ENCODE measurements at regions of chr2 and their contacts with region 1.

Region 1: GRCh38 chr2:61888267-61889055 is at the start of gene CCT4:
- DNase-seq: peak; percentile 86 to 99 (median 95)
- ATAC-seq: peak; percentile 94
- H3K4me3 ChIP-seq: peak within 1 kb of the TSS; percentile 92
- H3K4me3 Mint-ChIP-seq: peak within 1 kb of the TSS; percentile 85 to 100 (median 99)
- H3K27ac ChIP-seq: peak within 1 kb of the TSS; percentile 98
- H3K27ac Mint-ChIP-seq: peak within 1 kb of the TSS; percentile 98 to 100 (median 100)
- H3K4me1 ChIP-seq: peaks cover 15 to 17% of the 10 kb centered on the region in 2 donors
- H3K4me1 Mint-ChIP-seq: peaks cover 11 to 34% (median 29%) of the 10 kb centered on the region in 7 donors
- H3K27me3 ChIP-seq: no peaks in the 10 kb centered on the region
- H3K27me3 Mint-ChIP-seq: no peaks in the 10 kb centered on the region
- total RNA-seq, gene CCT4: 84.2 to 177 (median 90.3) TPM

Region 2: GRCh38 chr2:61065715-61066709 is 822.4 kb before region 1 on chr2 and contains the start of gene SANBR:
- CTCF ChIA-PET with region 1: no interaction called
- POLR2A ChIA-PET with region 1: no interaction called
- intact Hi-C with region 1: loop called in 1 of 2 experiments (anchors 10 kb)
- DNase-seq: peak; percentile 78 to 90 (median 83)
- ATAC-seq: peak; percentile 99
- H3K4me3 ChIP-seq: peak within 1 kb of the TSS; percentile 59
- H3K4me3 Mint-ChIP-seq: peak within 1 kb of the TSS; percentile 79 to 98 (median 95)
- H3K27ac ChIP-seq: peak within 1 kb of the TSS; percentile 49
- H3K27ac Mint-ChIP-seq: peak within 1 kb of the TSS; percentile 12 to 94 (median 79)
- H3K4me1 ChIP-seq: peaks cover 0 to 6% of the 10 kb centered on the region in 2 donors
- H3K4me1 Mint-ChIP-seq: peaks cover 0 to 17% (median 5%) of the 10 kb centered on the region in 7 donors
- H3K27me3 ChIP-seq: no peaks in the 10 kb centered on the region
- H3K27me3 Mint-ChIP-seq: peaks cover 0 to 2% (median 0%) of the 10 kb centered on the region in 5 donors
- total RNA-seq, gene SANBR: 2.0 to 5.9 (median 3.6) TPM

Region 3: DNA sequence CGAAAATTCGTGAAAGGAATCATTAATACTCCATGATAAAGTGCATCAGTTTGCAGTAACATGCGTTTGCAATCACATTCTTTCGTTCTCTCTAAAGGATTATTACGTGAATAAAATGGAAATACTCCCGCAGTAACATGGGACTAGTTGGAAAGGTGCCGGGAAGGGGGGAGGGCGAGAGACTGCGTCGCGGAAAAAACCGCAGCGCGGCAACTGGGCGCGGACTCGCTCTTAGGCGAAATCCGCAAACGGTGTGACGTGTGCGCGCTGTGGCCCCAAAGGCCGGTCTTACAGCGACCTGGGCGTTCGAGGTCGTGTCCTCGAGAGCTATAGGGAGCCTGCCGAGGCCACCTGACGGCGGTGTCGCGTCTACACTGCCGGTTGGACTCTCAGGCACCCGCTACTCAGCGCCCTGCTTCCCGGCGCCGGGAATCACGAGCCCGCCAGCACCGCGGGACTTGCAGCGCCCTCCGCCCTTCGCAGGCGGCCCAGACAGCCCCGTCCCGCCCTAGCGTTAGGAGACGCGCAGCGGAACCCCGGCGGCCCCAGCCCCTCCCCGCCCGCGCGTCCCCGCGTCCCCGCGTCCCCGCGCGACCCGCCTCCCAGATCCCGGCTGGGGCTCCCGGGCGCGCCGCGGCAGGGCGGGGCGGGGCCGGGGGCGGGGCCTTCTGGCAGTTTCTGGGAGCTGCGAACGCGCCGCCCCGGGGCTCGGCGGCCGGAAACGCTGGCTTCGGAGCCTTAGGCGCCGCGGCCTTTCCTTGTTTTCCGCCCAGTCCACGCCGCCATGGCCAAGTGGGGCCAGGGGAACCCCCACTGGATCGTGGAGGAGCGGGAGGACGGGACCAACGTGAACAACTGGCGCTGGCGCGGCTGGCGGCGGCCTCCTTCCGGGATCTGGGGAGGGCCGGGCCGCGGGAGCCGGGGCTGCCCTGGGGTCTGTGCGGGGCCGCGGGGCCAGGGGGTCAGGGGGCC is 711.4 kb before region 1 on chr2:
- CTCF ChIA-PET with region 1: no interaction called
- POLR2A ChIA-PET with region 1: no interaction called
- intact Hi-C with region 1: loop called in 1 of 2 experiments (anchors 1 kb)
- DNase-seq: peak; percentile 89 to 97 (median 93)
- ATAC-seq: peak; percentile 95
- H3K4me3 ChIP-seq: peak overlapping the region; percentile 82
- H3K4me3 Mint-ChIP-seq: peak overlapping the region; percentile 90 to 100 (median 94)
- H3K27ac ChIP-seq: peak overlapping the region; percentile 97
- H3K27ac Mint-ChIP-seq: peak overlapping the region; percentile 89 to 97 (median 95)
- H3K4me1 ChIP-seq: peaks cover 27 to 41% of the 10 kb centered on the region in 2 donors
- H3K4me1 Mint-ChIP-seq: peaks cover 38 to 53% (median 48%) of the 10 kb centered on the region in 7 donors
- H3K27me3 ChIP-seq: no peaks in the 10 kb centered on the region
- H3K27me3 Mint-ChIP-seq: peaks cover 0 to 8% (median 0%) of the 10 kb centered on the region in 5 donors

Region 4: GRCh38 chr2:61460163-61460562 is 428.3 kb before region 1 on chr2:
- CTCF ChIA-PET with region 1: no interaction called
- POLR2A ChIA-PET with region 1: no interaction called
- intact Hi-C with region 1: no loop called
- DNase-seq: no peak
- ATAC-seq: no peak
- H3K4me3 ChIP-seq: no peak overlapping the region
- H3K4me3 Mint-ChIP-seq: peak overlapping the region in 4 of 10 donors; percentile 16 to 52 (median 32)
- H3K27ac ChIP-seq: no peak overlapping the region
- H3K27ac Mint-ChIP-seq: peak overlapping the region in 3 of 9 donors; percentile 41 to 73 (median 72)
- H3K4me1 ChIP-seq: peaks cover 34 to 47% of the 10 kb centered on the region in 2 donors
- H3K4me1 Mint-ChIP-seq: peaks cover 43 to 94% (median 76%) of the 10 kb centered on the region in 7 donors
- H3K27me3 ChIP-seq: no peaks in the 10 kb centered on the region
- H3K27me3 Mint-ChIP-seq: no peaks in the 10 kb centered on the region

Region 5: DNA sequence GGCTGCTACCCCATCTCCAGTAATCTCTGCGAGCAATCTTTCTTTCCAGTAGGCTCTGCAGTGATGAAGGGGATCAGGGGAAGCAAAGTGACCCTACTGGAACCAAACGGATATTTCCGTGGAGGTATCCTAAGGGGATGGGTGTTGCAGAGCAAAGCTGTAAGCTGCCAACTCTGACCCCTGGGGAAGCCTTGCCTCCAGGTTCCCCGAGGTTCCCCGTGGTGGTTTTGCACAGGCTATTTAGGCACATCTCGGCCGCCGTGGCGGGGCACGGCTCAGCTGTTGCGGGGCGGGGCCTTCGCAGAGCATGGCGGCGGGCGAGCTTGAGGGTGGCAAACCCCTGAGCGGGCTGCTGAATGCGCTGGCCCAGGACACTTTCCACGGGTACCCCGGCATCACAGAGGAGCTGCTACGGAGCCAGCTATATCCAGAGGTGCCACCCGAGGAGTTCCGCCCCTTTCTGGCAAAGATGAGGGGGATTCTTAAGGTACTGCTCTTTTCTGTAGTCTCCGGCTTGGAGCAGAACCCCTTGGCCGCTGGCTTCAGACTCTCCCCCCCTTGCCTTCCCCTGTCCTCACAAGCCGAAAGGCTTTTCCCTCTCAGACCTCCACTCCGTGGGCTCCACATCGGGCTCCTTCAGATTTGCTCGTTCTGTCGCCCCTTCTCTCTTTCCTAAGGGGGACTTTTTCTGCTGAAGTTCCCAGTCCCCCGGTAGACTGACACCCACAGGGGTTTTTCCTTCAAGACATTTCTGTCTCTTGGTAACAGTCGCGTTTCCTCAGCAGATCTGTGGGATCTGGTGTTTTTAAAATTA is 17.1 kb after region 1 on chr2 and contains the start of gene COMMD1:
- CTCF ChIA-PET with region 1: no interaction called
- POLR2A ChIA-PET with region 1: interaction called, 11 read pairs
- intact Hi-C with region 1: loop called (anchors 1 kb)
- DNase-seq: peak; percentile 64 to 81 (median 76)
- ATAC-seq: peak; percentile 99
- H3K4me3 ChIP-seq: peak within 1 kb of the TSS; percentile 76
- H3K4me3 Mint-ChIP-seq: peak within 1 kb of the TSS; percentile 95 to 98 (median 96)
- H3K27ac ChIP-seq: peak within 1 kb of the TSS; percentile 83
- H3K27ac Mint-ChIP-seq: peak within 1 kb of the TSS; percentile 80 to 97 (median 86)
- H3K4me1 ChIP-seq: peaks cover 0 to 12% of the 10 kb centered on the region in 2 donors
- H3K4me1 Mint-ChIP-seq: peaks cover 14 to 42% (median 30%) of the 10 kb centered on the region in 7 donors
- H3K27me3 ChIP-seq: no peaks in the 10 kb centered on the region
- H3K27me3 Mint-ChIP-seq: no peaks in the 10 kb centered on the region
- total RNA-seq, gene COMMD1: 15.6 to 28.3 (median 20.8) TPM

Measured in naive thymus-derived CD4-positive, alpha-beta T cell (primary cell).